ENCODE measurements at regions of chr22 and their contacts with region 1.

Region 1: DNA sequence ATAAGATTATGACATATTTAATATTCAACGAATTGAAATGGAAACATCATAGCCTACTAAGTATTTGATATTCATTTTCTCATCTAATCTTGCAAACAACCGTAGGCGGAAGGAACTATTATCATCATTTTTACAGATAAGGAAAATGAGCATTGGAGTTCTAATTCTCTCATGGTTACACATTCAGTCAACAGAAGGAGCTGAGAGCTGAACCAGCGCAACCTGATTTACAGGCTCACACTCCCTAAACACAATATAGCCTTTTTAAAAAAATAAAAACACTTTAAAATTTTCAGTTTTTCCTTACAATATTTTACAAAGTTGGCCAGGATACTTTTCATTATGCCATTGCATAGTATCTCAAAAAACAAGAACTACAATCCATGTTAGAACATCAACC is 74.8 kb downstream of the APOL5 start:
- DNase-seq: no peak
- H3K4me3 ChIP-seq: no peak overlapping the region
- H3K27ac ChIP-seq: no peak overlapping the region
- H3K4me1 ChIP-seq: peaks cover 0 to 17% (median 7%) of the 10 kb centered on the region in 4 donors
- H3K27me3 ChIP-seq: no peaks in the 10 kb centered on the region
- CTCF ChIP-seq: no peak
- EP300 ChIP-seq: no peak
- POLR2A ChIP-seq: no peak

Region 2: DNA sequence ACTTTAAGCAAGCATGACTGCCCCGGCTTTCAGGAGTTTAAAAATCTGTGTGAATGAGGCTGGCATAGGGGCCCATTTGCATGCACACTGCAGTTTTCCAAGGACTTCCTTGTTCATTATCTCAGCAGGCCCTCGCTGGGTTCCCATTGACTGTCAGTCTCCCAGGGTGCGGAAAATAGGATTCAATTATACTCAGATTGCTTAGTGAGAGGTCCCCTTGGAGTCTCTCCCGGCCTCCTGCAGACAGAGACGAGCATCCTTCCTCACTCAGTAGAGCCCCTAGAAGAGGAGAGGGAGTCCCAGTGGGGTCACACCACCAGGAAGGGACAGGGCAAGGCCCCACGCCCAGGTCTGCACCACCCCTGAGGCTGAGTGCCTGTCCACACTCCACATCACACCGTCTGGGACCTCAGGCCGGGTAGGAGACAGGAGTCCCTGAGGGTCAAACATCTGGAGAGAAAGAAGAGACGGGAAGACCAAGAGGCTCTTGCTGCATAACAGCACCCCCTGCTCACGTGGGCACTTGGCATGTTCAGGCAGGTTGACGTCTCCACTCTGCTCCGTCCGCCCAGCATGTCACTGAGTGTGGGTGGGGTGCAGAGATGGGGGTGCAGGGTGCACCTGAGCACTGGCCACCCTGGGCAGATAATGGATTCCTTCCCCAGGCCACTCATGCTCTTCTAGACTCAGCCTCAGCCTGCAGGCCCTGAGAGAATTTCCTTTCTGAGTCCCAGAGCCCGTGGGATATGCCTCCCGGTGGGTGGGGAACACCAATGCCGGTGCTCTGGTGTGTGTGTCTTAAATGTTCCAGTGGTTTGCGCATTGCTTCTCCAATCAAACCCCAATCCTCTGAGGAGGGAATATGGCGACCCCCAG is 333.7 kb before region 1 on chr22:
- intact Hi-C with region 1: no loop called
- DNase-seq: no peak
- H3K4me3 ChIP-seq: no peak overlapping the region
- H3K27ac ChIP-seq: no peak overlapping the region
- H3K4me1 ChIP-seq: no peaks in the 10 kb centered on the region
- H3K27me3 ChIP-seq: no peaks in the 10 kb centered on the region
- CTCF ChIP-seq: no peak
- EP300 ChIP-seq: no peak
- POLR2A ChIP-seq: no peak

Region 3: GRCh38 chr22:35568751-35569725 is 223.5 kb before region 1 on chr22:
- intact Hi-C with region 1: no loop called
- DNase-seq: no peak
- H3K4me3 ChIP-seq: no peak overlapping the region
- H3K27ac ChIP-seq: peak overlapping the region in 1 of 4 donors; percentile 20
- H3K4me1 ChIP-seq: peaks cover 0 to 40% (median 30%) of the 10 kb centered on the region in 4 donors
- H3K27me3 ChIP-seq: no peaks in the 10 kb centered on the region
- CTCF ChIP-seq: no peak
- EP300 ChIP-seq: no peak
- POLR2A ChIP-seq: no peak

Region 4: GRCh38 chr22:35834061-35834460 is 41.6 kb after region 1 on chr22:
- intact Hi-C with region 1: loop called (anchors 5 kb)
- DNase-seq: no peak
- H3K4me3 ChIP-seq: no peak overlapping the region
- H3K27ac ChIP-seq: peak overlapping the region; percentile 80 to 86 (median 84)
- H3K4me1 ChIP-seq: peaks cover 0 to 94% (median 79%) of the 10 kb centered on the region in 4 donors
- H3K27me3 ChIP-seq: no peaks in the 10 kb centered on the region
- CTCF ChIP-seq: no peak
- EP300 ChIP-seq: no peak
- POLR2A ChIP-seq: no peak

Measured in sigmoid colon (tissue), 7 donors.